Activated CD4-positive, alpha-beta memory T cell treated with anti-CD3 and anti-CD28 coated beads for 36 hours (primary cell): ENCODE measurements at regions of chr11 and their contacts with region 1.

Region 1: GRCh38 chr11:128733440-128734102 is 39.7 kb downstream of the FLI1 start:
- DNase-seq: peak; percentile 65
- H3K4me3 Mint-ChIP-seq: peak overlapping the region; percentile 63
- H3K27ac Mint-ChIP-seq: peak overlapping the region; percentile 79
- H3K4me1 Mint-ChIP-seq: peaks cover 98% of the 10 kb centered on the region
- H3K27me3 Mint-ChIP-seq: no peaks in the 10 kb centered on the region

Region 2: DNA sequence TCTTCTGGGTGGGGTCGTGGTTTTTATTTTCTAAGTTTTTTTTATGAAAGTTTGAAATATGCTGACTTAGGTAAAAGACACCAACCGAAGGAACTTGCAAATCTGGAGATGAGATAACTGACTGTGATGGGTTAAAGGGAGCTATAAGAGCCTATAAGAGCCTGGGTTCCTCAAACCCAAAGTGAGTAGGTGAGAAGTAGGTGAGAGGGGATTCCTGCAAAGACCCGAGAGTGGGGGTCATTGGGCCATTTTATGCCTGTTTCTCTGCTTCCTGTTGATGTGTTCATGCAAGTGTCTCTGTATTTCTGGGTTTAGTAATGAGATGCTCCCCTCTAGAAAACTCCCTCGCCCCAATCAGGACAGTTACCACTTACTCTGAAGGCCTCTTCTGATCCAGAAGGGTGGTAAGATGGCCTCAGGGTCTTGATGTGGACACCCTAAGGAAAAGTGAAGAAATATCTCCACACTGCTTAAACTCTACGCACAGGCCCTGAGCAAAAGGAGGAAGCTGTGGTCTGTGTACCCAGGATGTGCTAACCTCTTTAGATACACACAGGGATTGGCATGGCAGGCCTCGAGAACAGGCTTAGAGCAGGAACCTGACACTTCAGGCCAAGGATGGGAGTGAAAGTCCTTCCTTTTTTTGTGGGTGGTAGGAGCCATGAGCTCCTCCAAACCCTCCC is 37.9 kb before region 1 on chr11:
- CTCF ChIA-PET with region 1: interaction called, 4 read pairs
- POLR2A ChIA-PET with region 1: interaction called, 9 read pairs
- intact Hi-C with region 1: loop called (anchors 1 kb)
- DNase-seq: peak; percentile 55
- H3K4me3 Mint-ChIP-seq: peak overlapping the region; percentile 78
- H3K27ac Mint-ChIP-seq: peak overlapping the region; percentile 89
- H3K4me1 Mint-ChIP-seq: peaks cover 57% of the 10 kb centered on the region
- H3K27me3 Mint-ChIP-seq: peaks cover 5% of the 10 kb centered on the region

Region 3: GRCh38 chr11:128701086-128701485 is 32.5 kb before region 1 on chr11:
- CTCF ChIA-PET with region 1: interaction called, 6 read pairs
- POLR2A ChIA-PET with region 1: interaction called, 4 read pairs
- intact Hi-C with region 1: loop called (anchors 1 kb)
- DNase-seq: no peak
- H3K4me3 Mint-ChIP-seq: no peak overlapping the region
- H3K27ac Mint-ChIP-seq: peak overlapping the region; percentile 59
- H3K4me1 Mint-ChIP-seq: peaks cover 93% of the 10 kb centered on the region
- H3K27me3 Mint-ChIP-seq: no peaks in the 10 kb centered on the region